ENCODE measurements at regions of chr19 and their contacts with region 1.

Region 1: DNA sequence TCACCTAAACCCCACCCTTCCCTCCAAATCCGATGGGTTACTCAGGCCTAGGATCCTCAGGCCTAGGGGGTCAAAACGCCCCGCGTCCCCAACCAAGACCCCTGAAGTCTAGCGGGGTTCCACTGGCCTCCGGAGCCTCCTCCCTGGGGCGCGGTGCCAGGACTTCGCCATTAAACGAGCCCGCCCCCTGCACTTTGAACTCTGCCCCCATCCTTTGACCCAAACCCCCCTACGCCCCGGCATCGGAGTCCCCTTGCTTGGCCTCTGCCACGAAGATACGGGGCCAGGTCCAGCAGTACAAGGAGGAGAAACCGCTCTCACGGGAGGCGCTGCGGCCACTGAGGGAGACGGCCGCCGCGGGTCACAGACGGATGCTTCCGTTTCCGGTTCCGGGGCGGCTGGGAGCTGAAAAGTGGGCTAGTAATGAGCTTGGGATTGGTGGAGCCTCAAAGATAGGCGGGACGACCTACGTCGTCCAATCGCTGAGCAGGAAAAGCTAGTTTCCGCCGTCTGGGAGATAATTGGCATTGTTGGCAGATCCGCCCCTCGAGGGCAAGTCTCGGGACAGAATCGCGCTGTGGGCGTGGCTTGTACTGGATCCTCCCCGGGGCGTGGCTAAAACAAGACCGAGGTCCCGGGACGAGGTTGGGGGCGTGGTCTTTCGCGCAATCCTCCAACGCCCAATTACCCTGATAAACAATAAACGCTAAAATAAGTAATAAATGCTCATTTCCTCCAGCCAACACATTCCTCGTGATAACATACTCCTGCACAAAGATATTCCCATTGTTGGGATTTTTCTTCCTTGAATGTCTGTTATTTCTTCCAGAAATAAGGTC is 5.7 kb upstream of the ZNF77 start:
- DNase-seq: peak; percentile 99
- ATAC-seq: peak; percentile 96
- H3K4me3 ChIP-seq: peak overlapping the region; percentile 90 to 91
- H3K27ac ChIP-seq: peak overlapping the region; percentile 70
- H3K4me1 ChIP-seq: peaks cover 12 to 25% of the 10 kb centered on the region in 2 experiments; a peak in 3 of 4 replicates
- H3K27me3 ChIP-seq: no peaks in the 10 kb centered on the region
- CTCF ChIP-seq: no peak
- POLR2A ChIP-seq: peak; percentile 65
- RAD21 ChIP-seq: no peak

Region 2: DNA sequence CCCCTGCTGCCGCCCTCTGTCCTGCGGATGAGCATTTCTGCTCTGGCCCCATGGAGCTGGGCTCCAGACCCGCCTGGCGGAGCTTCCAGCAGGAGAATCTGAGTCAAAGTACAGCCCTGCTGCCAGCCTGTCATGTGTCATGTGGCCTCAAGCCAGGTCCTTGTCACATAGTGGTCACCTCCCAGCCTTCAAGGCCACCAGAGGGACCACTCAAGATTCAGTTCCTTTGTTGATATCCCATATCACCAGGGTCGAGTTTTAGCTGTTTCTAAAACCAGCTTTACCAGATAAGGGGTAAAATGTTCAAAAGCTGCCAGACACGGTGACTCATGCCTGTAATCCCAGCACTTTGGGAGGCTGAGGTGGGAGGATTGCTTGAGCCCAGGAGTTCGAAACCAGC is 151.8 kb before region 1 on chr19:
- CTCF ChIA-PET with region 1: no interaction called
- POLR2A ChIA-PET with region 1: no interaction called
- RAD21 ChIA-PET with region 1: no interaction called
- intact Hi-C with region 1: no loop called
- DNase-seq: no peak
- ATAC-seq: no peak
- H3K4me3 ChIP-seq: no peak overlapping the region
- H3K27ac ChIP-seq: no peak overlapping the region
- H3K4me1 ChIP-seq: peaks cover 0 to 6% of the 10 kb centered on the region in 2 experiments; a peak in 2 of 4 replicates
- H3K27me3 ChIP-seq: no peaks in the 10 kb centered on the region
- CTCF ChIP-seq: no peak
- POLR2A ChIP-seq: no peak
- RAD21 ChIP-seq: no peak

Region 3: GRCh38 chr19:2887391-2887914 is 63.1 kb before region 1 on chr19:
- CTCF ChIA-PET with region 1: interaction called, 18 read pairs
- POLR2A ChIA-PET with region 1: interaction called, 9 read pairs
- RAD21 ChIA-PET with region 1: interaction called in 1 of 2 experiments, 3 read pairs
- intact Hi-C with region 1: no loop called
- DNase-seq: peak; percentile 64
- ATAC-seq: peak; percentile 90
- H3K4me3 ChIP-seq: no peak overlapping the region
- H3K27ac ChIP-seq: no peak overlapping the region
- H3K4me1 ChIP-seq: no peaks in the 10 kb centered on the region
- H3K27me3 ChIP-seq: no peaks in the 10 kb centered on the region
- CTCF ChIP-seq: peak; percentile 47 to 64 (median 56); a peak in 5 of 6 replicates
- POLR2A ChIP-seq: no peak
- RAD21 ChIP-seq: peak; percentile 68

Region 4: DNA sequence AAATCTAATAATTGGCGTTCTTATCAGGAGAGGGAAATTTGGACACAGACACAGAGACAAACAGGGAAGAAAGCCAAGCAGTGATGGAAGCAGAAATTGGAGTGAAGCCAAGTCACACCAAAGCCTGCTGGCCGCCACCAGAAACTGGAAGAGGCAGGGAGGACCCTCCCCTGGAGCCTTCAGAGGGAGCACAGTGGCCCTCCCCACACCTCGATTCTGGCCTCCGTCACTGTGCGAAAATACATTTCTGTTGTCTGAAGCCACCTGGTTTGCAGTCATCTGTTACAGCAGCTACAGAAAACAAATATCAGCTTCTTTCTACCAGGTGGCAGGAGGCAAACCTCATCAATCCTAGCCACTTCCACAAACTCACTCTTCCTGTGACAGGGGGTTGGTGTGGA is 18.6 kb after region 1 on chr19:
- CTCF ChIA-PET with region 1: interaction called, 11 read pairs
- POLR2A ChIA-PET with region 1: no interaction called
- RAD21 ChIA-PET with region 1: interaction called in 1 of 2 experiments, 4 read pairs
- intact Hi-C with region 1: no loop called
- DNase-seq: no peak
- ATAC-seq: no peak
- H3K4me3 ChIP-seq: no peak overlapping the region
- H3K27ac ChIP-seq: no peak overlapping the region
- H3K4me1 ChIP-seq: peaks cover 4 to 5% of the 10 kb centered on the region in 2 experiments; a peak in 3 of 4 replicates
- H3K27me3 ChIP-seq: no peaks in the 10 kb centered on the region
- CTCF ChIP-seq: no peak
- POLR2A ChIP-seq: no peak
- RAD21 ChIP-seq: no peak

Region 5: DNA sequence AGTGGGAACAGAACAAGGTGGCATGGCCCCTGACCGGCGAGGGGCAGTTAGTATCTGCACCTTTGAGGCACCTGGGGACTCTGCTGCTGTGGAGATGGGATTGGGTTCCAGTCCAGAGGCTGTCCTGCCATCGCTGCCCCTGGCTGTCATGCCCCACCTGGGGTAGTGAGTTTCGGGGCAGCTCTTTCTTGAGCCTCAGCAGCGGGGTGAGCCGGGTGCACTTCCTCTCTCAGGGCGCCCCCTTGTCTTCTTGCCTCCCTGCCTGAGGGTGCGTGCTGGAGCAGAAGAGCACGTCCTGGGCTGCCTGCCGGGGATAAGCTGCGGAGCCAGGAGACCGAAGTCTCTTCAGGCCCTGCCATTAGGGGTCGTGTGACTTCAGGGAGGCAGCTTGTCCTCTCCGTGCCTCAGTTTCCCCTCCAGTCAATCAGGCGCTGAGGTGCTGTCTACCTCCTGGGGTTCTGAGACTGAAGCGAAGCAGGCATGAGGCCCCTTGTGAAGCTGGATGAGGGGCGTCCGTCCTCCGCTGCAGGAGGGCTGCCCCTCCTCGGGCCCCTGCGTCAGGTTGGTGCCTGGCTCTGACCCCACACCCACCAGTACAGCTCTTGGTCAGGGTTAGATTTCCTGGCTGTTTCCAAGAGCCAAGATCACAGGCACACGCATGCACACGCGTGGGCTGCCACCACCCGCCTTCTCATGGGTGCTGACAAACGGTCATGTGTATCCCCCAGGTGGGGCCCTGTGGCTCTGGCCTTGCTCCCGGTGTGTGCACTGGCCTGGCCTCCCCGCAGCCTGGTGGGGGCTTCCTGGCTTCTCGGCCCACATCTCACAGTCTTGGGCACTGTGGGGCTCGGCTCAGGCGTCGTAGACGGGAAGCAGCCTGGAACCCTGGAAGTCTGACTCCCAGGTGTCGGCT is 152.0 kb after region 1 on chr19:
- CTCF ChIA-PET with region 1: interaction called, 31 read pairs
- POLR2A ChIA-PET with region 1: interaction called, 6 read pairs
- RAD21 ChIA-PET with region 1: interaction called in 1 of 2 experiments, 5 read pairs
- intact Hi-C with region 1: no loop called
- DNase-seq: no peak
- ATAC-seq: no peak
- H3K4me3 ChIP-seq: no peak overlapping the region
- H3K27ac ChIP-seq: no peak overlapping the region
- H3K4me1 ChIP-seq: peaks cover 7 to 13% of the 10 kb centered on the region in 2 experiments
- H3K27me3 ChIP-seq: no peaks in the 10 kb centered on the region
- CTCF ChIP-seq: no peak
- POLR2A ChIP-seq: no peak
- RAD21 ChIP-seq: no peak

Region 6: GRCh38 chr19:3125900-3126524 is 175.5 kb after region 1 on chr19:
- CTCF ChIA-PET with region 1: interaction called, 13 read pairs
- POLR2A ChIA-PET with region 1: no interaction called
- RAD21 ChIA-PET with region 1: interaction called in 1 of 2 experiments, 3 read pairs
- intact Hi-C with region 1: no loop called
- DNase-seq: peak; percentile 60
- ATAC-seq: peak; percentile 96
- H3K4me3 ChIP-seq: no peak overlapping the region
- H3K27ac ChIP-seq: no peak overlapping the region
- H3K4me1 ChIP-seq: peaks cover 6 to 7% of the 10 kb centered on the region in 2 experiments; a peak in 3 of 4 replicates
- H3K27me3 ChIP-seq: no peaks in the 10 kb centered on the region
- CTCF ChIP-seq: peak; percentile 76 to 88 (median 81)
- POLR2A ChIP-seq: no peak
- RAD21 ChIP-seq: peak; percentile 52

Measured in HCT116 (cell line).